ENCODE measurements at regions of chr2 and their contacts with region 1.

Region 1: DNA sequence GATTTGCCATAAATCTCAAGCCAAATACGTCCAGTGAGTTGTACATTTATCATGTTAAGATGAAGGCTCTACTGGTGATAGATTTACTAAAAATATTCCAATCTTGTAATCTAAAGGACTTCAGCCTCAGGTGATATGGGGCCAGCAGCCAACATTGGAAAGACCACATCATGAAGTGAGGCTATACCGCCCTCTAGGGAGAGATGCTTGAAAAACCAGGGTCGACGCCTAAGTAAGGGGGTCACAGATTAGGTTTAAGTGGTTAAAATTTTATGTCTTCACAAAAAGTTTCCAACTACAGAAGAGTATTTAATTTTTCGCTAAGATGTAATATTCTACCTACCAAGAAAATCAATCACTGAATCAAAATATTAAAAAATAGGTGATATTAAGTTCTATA is 33.3 kb downstream of the DOCK10 start:
- DNase-seq: no peak

Region 2: DNA sequence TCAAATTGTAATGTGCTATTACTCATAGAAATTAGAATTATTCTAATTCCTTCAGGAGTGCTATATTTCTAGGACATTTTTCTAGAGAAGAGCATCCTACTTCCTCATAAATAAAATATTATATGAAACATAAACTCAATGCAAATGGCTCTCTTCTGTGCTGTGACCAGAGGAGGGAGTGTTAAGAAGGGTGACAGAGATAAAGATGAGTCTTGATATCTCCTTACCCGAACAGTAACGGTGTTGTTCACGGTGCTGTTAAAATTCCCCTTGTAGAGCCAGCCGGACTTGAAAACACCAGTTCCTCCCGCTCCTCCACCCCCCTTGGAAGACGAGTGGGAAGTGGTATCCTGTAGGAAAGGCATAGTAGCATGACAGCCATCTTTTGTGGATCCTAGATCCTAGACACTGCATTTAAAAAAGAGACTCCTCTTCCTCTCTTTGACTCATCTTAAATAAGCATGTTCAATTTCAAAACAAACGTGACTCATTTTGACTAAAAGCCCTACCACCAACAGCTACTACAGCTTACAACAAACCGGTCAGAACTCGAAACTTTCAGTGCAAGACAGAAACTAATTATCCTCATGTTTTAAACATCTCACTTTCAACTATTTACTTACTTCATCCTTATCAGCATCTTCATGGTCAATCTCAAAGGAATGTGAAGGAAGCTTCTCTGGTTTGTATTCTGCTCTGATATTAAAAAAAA is 122.9 kb before region 1 on chr2:
- intact Hi-C with region 1: loop called (anchors 5 kb)
- DNase-seq: no peak

Region 3: GRCh38 chr2:225052703-225053102 is 43.8 kb after region 1 on chr2:
- intact Hi-C with region 1: no loop called
- DNase-seq: no peak

Region 4: DNA sequence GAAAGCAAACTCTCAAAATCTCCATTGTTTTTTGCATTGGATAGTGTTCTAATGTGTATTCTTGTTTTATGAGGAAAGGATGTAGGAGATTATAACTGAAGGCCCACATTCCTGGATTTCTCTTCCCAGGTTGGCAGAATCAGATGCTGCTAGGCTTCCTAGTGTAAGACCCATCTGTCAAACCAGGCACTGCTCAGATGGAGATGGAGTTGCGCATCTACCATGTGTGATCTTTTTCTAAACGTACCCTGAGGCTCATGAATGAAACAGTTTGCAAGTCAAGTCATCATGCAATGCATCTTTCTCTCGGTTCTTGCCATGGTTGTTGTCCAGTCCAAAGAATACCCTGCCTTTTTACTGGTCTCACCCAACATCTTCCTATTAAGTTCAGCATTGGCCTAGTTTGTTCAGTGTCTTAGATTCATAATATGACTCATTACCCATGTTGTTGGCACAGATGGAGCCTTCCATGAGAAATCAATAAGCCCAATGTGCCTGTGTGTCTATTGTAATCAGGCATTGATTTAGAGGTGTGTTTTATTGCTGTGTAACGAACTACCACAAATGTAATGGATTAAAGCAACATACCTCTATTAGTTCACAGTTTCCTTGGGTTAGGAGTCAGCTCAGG is 517.9 kb after region 1 on chr2:
- intact Hi-C with region 1: no loop called
- DNase-seq: no peak